PC-9 (cell line): ENCODE measurements at regions of chr2 and their contacts with region 1.

Region 1: GRCh38 chr2:54624591-54625071 is 98.8 kb upstream of the EML6 start:
- DNase-seq: no peak
- H3K4me3 ChIP-seq: no peak overlapping the region
- H3K27ac ChIP-seq: no peak overlapping the region
- H3K4me1 ChIP-seq: no peaks in the 10 kb centered on the region
- H3K27me3 ChIP-seq: no peaks in the 10 kb centered on the region
- CTCF ChIP-seq: no peak

Region 2: GRCh38 chr2:54634564-54635511 is 10.2 kb after region 1 on chr2:
- CTCF ChIA-PET with region 1: no interaction called
- POLR2A ChIA-PET with region 1: interaction called, 21 read pairs
- intact Hi-C with region 1: no loop called
- DNase-seq: peak in 1 of 2 experiments; percentile 11
- H3K4me3 ChIP-seq: no peak overlapping the region
- H3K27ac ChIP-seq: no peak overlapping the region
- H3K4me1 ChIP-seq: no peaks in the 10 kb centered on the region
- H3K27me3 ChIP-seq: no peaks in the 10 kb centered on the region
- CTCF ChIP-seq: no peak